Activated CD4-positive, alpha-beta T cell treated with anti-CD3 and anti-CD28 coated beads, Interleukin-2, amount 10 ng/mL, durations not matched to agents 7 days and 5 days (primary cell): ENCODE measurements at regions of chr2 and their contacts with region 1.

Region 1: DNA sequence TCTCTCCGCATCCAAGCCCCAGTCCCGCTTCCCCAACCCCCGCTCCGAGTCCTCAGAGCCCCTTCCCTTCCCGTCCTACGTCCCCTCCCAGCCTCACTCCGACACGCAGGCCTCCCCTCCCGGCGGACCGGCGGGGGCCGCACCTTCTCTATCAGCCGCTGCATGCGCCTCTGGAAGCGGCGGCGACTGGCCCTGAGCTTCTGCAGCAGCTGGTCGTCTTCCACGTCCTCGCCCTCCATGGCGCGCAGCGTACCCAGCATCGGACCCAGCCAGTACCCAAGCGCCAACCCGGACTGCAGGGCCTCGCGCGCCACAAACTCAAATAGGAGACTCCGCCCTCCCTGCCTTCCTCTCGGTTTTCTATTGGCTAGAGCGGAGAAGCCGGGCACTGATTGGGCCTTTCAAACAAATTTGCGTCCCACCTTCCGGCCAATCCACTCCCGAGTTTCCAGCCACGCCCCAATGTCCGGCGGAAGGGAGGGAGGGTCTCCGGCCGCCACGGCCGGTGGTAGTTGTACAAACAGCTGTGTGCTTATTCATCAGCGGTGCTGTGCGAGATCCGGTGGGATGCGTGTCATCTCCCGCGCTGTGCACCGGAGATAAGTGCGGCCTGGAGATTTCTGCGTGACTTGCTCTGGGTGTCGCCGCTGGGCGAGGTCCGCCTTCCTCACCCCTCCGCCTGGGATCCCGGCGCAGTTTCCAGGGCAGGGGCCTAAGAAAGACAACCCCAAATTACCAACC is at the start of gene HJURP:
- DNase-seq: peak; percentile 96
- H3K4me3 Mint-ChIP-seq: peak within 1 kb of the TSS; percentile 87
- H3K27ac Mint-ChIP-seq: peak within 1 kb of the TSS; percentile 93
- H3K4me1 Mint-ChIP-seq: peaks cover 60% of the 10 kb centered on the region
- H3K27me3 Mint-ChIP-seq: peaks cover 2% of the 10 kb centered on the region
- total RNA-seq, gene HJURP: 139 to 141 TPM

Region 2: DNA sequence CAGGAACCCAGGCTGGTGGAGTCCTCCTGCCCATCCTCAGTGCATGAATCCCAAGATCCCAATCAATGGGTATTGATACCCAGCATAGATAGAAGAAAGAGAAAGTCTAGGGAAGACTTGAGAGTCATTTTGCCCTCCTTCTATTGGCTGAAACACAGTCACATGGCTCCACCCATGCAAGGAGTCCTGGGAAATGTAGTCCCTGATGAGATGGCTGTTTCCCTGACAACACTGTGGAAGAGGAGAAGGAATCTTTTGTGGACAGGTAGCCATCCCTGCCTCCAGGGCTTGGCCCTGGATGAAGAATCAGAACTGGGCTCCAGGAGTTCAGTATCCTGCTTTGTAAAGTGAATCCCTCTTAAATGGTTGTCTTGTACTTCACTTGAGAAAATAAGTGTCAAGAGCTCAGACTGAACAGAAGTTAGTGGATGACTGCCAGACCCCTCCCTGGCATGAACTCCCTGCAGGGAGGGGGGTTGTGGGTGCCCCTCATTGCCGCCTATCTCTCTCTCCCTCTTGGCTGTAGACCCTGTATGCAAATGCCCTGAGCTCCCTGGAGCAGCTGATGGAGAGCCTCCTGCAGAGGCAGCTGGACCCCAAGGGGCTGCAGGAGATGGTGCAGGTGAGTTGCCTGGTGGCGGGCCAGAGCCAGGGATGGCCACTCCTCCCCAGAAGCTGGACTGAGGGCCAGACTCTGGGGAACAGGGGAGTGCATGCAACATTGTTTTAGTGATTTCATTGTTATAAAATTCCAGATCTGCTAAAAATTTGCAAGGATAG is 40.2 kb before region 1 on chr2:
- CTCF ChIA-PET with region 1: no interaction called
- POLR2A ChIA-PET with region 1: no interaction called
- DNase-seq: no peak
- H3K4me3 Mint-ChIP-seq: no peak overlapping the region
- H3K27ac Mint-ChIP-seq: no peak overlapping the region
- H3K4me1 Mint-ChIP-seq: no peaks in the 10 kb centered on the region
- H3K27me3 Mint-ChIP-seq: peaks cover 7% of the 10 kb centered on the region

Region 3: GRCh38 chr2:233867993-233868532 is 13.7 kb after region 1 on chr2 and contains the start of gene MSL3B:
- CTCF ChIA-PET with region 1: interaction called, 11 read pairs
- POLR2A ChIA-PET with region 1: no interaction called
- DNase-seq: peak; percentile 48
- H3K4me3 Mint-ChIP-seq: peak within 1 kb of the TSS; percentile 90
- H3K27ac Mint-ChIP-seq: peak within 1 kb of the TSS; percentile 92
- H3K4me1 Mint-ChIP-seq: peaks cover 25% of the 10 kb centered on the region
- H3K27me3 Mint-ChIP-seq: peaks cover 30% of the 10 kb centered on the region